ENCODE measurements at regions of chr1 and their contacts with region 1.

Region 1: DNA sequence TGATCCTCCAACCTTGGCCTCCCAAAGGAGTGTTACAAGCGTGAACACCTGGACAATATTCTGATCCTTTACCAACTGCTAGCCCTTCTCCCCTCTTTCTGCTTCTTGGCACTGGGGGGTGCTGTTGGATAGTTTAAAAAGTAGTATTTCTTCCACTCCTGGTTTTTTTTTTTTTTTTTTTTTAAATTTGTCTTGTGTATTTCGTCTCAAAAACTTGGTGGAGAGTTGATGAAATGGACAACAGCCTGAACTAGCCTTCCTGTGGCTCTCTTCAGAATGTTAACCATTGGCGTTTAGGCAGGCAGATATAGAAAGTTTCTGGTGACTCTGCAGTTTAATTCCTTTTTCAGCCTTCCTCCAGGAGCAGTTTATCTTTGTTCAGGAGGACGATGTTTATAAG is 69.7 kb upstream of the USP24 start:
- DNase-seq: no peak
- H3K4me3 ChIP-seq: no peak overlapping the region
- H3K27me3 ChIP-seq: peaks cover 2% of the 10 kb centered on the region; the same call in 1 of the 2 replicates
- CTCF ChIP-seq: peak; percentile 63

Region 2: DNA sequence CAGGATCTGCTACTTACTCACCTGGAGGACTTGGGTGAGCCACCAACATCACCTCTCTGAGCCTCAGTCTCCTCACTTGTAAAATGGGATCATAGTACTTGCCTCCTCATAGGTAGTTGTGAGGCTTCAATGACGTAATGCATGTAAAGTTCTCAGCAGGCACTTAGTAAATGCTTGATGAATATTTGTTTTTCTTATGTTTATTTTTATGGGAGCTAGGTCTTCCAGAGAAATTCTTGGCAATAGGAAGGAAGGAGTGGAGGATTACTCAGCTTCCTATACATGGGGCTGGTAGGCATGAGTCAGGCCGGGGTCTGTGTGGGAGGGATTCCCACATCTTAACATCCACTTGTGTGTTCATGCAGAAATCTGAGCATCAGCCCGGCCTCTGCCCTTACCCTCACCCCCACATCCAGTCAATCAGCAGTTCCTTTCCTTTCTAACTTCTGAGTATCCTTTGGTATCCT is 25.7 kb after region 1 on chr1:
- CTCF ChIA-PET with region 1: no interaction called
- POLR2A ChIA-PET with region 1: no interaction called
- DNase-seq: peak; percentile 95
- H3K4me3 ChIP-seq: no peak overlapping the region
- H3K27me3 ChIP-seq: 0 out of 2 replicates have a peak, but pooled peaks cover 2% of the 10 kb centered on the region
- CTCF ChIP-seq: no peak

Region 3: DNA sequence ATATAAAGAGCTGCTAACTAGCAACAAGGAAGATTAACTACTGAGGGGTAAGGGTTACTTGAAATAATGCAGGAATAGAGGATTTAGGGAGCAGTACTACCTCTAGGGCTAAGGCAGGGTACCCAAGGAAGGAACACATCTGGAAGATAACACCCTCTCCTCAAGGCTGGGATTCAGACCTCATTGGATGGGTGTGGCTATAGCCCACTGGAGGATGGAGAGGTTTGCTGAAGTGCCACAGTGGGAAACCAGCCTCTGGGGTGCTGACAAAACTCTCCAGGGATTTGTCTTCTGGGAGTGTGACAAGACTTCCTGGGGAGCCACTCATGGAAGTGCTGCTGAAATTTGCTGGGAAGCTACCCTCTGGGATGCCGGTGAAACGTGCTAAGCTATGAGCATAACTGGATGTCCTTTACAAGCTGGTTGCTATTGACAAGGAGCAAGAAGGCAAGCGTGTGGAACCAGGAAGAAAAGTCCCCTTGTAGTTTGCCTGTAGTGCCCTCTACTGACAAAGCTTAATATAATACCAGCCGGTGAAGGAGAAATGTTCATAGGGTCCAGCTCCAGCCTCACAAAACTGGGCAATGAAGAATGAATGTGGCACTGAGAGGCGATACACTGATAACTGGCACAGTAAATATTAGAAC is 53.1 kb after region 1 on chr1:
- CTCF ChIA-PET with region 1: interaction called, 42 read pairs
- POLR2A ChIA-PET with region 1: no interaction called
- DNase-seq: no peak
- H3K4me3 ChIP-seq: no peak overlapping the region
- H3K27me3 ChIP-seq: no peaks in the 10 kb centered on the region
- CTCF ChIP-seq: peak; percentile 65

Region 4: DNA sequence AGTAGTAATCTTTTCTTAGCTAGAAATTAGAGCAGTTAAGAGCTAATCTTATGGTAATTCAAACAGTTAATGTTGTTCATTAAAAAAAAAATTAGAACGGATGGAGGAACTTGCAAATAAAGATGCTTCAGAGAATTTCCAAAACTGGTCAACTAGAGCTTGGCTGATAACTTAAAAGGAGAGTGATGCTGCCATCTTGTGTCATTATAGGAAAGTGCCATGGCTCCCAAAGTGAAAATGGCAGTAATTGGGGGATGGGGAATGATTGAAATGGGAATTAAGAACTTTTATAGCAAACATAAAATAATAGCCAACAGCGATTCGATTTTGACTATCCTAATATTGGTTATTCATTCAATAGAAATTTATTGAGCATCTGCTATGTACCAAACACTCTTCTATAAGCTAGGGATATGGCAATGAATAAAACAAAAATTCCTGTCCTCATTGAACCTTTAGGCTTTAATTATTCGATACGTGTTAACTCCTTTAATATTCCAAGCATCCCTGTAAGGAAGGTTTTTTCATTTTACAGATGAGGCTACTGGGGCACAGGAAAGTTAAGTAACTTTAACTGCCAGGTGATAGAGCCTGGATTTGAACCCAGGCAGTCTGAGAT is 1300.2 kb after region 1 on chr1:
- CTCF ChIA-PET with region 1: interaction called, 59 read pairs
- POLR2A ChIA-PET with region 1: no interaction called
- DNase-seq: no peak
- H3K4me3 ChIP-seq: no peak overlapping the region
- H3K27me3 ChIP-seq: no peaks in the 10 kb centered on the region
- CTCF ChIP-seq: peak; percentile 78

Region 5: GRCh38 chr1:56709269-56709880 is 1424.5 kb after region 1 on chr1:
- CTCF ChIA-PET with region 1: interaction called, 14 read pairs
- POLR2A ChIA-PET with region 1: no interaction called
- DNase-seq: no peak
- H3K4me3 ChIP-seq: no peak overlapping the region
- H3K27me3 ChIP-seq: no peaks in the 10 kb centered on the region
- CTCF ChIP-seq: peak; percentile 54

Region 6: GRCh38 chr1:56821140-56821797 is 1536.4 kb after region 1 on chr1:
- CTCF ChIA-PET with region 1: interaction called, 12 read pairs
- POLR2A ChIA-PET with region 1: no interaction called
- DNase-seq: no peak
- H3K4me3 ChIP-seq: no peak overlapping the region
- H3K27me3 ChIP-seq: no peaks in the 10 kb centered on the region
- CTCF ChIP-seq: peak; percentile 98